Mammary epithelial cell (primary cell): ENCODE measurements at regions of chr9 and their contacts with region 1.

Region 1: GRCh38 chr9:21812946-21813568 is 10.6 kb downstream of the MTAP start:
- DNase-seq: peak; percentile 74
- H3K4me3 ChIP-seq: no peak overlapping the region
- H3K27ac ChIP-seq: peak overlapping the region; percentile 79
- H3K4me1 ChIP-seq: peaks cover 50% of the 10 kb centered on the region
- H3K27me3 ChIP-seq: no peaks in the 10 kb centered on the region
- CTCF ChIP-seq: peak; percentile 85 to 91

Region 2: DNA sequence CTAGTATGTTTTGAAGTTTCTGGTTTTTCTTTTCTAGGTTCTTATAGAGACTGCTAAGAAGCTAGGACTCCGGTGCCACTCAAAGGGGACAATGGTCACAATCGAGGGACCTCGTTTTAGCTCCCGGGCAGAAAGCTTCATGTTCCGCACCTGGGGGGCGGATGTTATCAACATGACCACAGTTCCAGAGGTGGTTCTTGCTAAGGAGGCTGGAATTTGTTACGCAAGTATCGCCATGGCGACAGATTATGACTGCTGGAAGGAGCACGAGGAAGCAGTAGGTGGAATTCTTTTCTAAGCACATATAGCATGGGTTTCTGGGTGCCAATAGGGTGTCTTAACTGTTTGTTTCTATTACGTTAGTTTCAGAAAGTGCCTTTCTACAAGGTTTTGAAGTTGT is 41.5 kb after region 1 on chr9:
- CTCF ChIA-PET with region 1: no interaction called
- dilution Hi-C with region 1: loop called (anchors 5 kb)
- in situ Hi-C with region 1: no loop called
- intact Hi-C with region 1: no loop called
- DNase-seq: peak; percentile 92
- H3K4me3 ChIP-seq: no peak overlapping the region
- H3K27ac ChIP-seq: peak overlapping the region; percentile 71
- H3K4me1 ChIP-seq: peaks cover 22% of the 10 kb centered on the region
- H3K27me3 ChIP-seq: no peaks in the 10 kb centered on the region
- CTCF ChIP-seq: no peak

Region 3: DNA sequence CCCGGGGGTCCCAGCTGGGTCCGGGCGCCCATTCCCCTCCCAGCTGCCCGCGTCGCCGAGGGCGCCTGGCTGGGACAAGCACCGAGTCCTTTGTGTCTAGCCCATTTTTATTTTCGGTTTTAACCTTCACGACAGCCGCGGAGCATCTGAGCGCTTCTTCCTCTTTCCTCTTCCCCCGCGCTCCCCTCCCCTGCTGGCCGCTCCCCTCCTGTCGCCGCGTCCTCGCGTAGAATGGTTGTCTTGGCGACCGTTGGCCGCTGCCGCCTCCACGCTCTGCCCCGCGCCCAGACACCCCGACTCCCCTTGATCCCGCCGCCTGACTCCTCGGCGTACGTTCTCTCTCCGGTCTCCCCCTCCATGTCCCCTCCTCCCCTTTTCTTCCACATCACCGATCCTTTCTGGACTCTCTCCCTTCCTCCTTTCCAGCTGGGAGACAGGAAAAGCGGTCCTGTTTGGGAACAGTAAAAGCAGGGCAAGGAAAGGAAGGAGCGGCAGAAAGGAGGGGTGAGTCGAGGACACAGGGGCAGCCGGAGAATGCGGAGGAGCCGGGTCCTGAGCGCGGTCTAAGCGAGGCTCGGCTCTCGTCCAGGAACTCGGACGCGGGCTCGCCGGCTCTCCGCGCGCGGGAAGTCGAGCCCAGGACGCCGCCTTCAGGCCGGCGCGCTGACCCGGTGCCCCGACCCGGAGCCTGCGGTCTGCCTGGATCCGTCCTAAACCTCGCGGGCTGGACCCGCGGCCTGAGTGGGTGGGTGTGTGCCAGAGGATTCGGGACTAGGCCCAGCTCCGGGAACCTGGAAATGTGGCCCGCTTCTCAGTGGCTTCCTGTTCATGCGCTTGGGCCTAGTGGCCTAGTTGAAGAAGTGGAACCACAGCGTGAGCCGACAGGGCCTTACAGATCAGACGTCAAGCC is 182.4 kb after region 1 on chr9:
- CTCF ChIA-PET with region 1: no interaction called
- dilution Hi-C with region 1: no loop called
- in situ Hi-C with region 1: loop called in 1 of 2 experiments (anchors 10 kb)
- intact Hi-C with region 1: loop called (anchors 1 kb)
- DNase-seq: peak; percentile 80
- H3K4me3 ChIP-seq: peak overlapping the region; percentile 71 to 98 (median 94)
- H3K27ac ChIP-seq: peak overlapping the region; percentile 96
- H3K4me1 ChIP-seq: peaks cover 19% of the 10 kb centered on the region
- H3K27me3 ChIP-seq: no peaks in the 10 kb centered on the region
- CTCF ChIP-seq: peak in 1 of 2 donors; percentile 46

Region 4: GRCh38 chr9:22037954-22038690 is 225.1 kb after region 1 on chr9:
- CTCF ChIA-PET with region 1: no interaction called
- dilution Hi-C with region 1: loop called (anchors 5 kb)
- in situ Hi-C with region 1: no loop called
- intact Hi-C with region 1: loop called (anchors 1 kb)
- DNase-seq: peak; percentile 57
- H3K4me3 ChIP-seq: no peak overlapping the region
- H3K27ac ChIP-seq: peak overlapping the region; percentile 91
- H3K4me1 ChIP-seq: peaks cover 75% of the 10 kb centered on the region
- H3K27me3 ChIP-seq: no peaks in the 10 kb centered on the region
- CTCF ChIP-seq: peak; percentile 42 to 62

Region 5: DNA sequence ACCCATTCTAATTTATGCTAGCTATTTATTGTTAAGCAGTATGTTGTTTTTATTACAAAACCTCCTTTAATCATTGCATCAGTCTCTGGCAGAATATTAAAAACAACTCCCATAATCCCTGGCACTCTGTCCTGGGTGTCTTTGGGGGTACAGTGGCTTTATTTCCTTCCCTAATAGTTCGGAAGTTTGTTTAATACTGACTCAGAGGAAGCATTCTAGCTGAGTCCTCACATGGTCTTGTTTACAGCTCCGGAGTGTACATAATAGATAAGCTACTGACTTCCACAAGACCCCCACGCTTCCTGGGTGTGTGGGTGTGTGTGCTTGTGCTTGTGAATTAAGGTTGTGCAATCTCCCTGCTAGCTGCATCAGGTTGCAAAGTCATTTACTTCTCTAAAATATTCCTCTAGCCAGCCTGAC is 345.9 kb after region 1 on chr9:
- CTCF ChIA-PET with region 1: no interaction called
- dilution Hi-C with region 1: loop called (anchors 5 kb)
- in situ Hi-C with region 1: no loop called
- intact Hi-C with region 1: no loop called
- DNase-seq: no peak
- H3K4me3 ChIP-seq: no peak overlapping the region
- H3K27ac ChIP-seq: peak overlapping the region; percentile 69
- H3K4me1 ChIP-seq: peaks cover 30% of the 10 kb centered on the region
- H3K27me3 ChIP-seq: no peaks in the 10 kb centered on the region
- CTCF ChIP-seq: no peak

Region 6: GRCh38 chr9:22244141-22245011 is 431.3 kb after region 1 on chr9:
- CTCF ChIA-PET with region 1: interaction called, 7 read pairs
- dilution Hi-C with region 1: loop called (anchors 25 kb)
- in situ Hi-C with region 1: loop called (anchors 5 to 10 kb)
- intact Hi-C with region 1: loop called (anchors 1 kb)
- DNase-seq: peak; percentile 58
- H3K4me3 ChIP-seq: peak overlapping the region in 1 of 3 experiments; percentile 19
- H3K27ac ChIP-seq: no peak overlapping the region
- H3K4me1 ChIP-seq: peaks cover 30% of the 10 kb centered on the region
- H3K27me3 ChIP-seq: no peaks in the 10 kb centered on the region
- CTCF ChIP-seq: peak; percentile 59 to 77

Region 7: GRCh38 chr9:22446950-22447617 is 634.0 kb after region 1 on chr9:
- CTCF ChIA-PET with region 1: interaction called, 3 read pairs
- dilution Hi-C with region 1: no loop called
- in situ Hi-C with region 1: loop called in 1 of 2 experiments (anchors 10 kb)
- intact Hi-C with region 1: loop called (anchors 1 kb)
- DNase-seq: peak; percentile 63
- H3K4me3 ChIP-seq: peak overlapping the region; percentile 68 to 86 (median 71)
- H3K27ac ChIP-seq: no peak overlapping the region
- H3K4me1 ChIP-seq: no peaks in the 10 kb centered on the region
- H3K27me3 ChIP-seq: no peaks in the 10 kb centered on the region
- CTCF ChIP-seq: peak; percentile 12 to 49